ENCODE measurements at regions of chr16 and their contacts with region 1.

Region 1: GRCh38 chr16:1363501-1364041 is 11.8 kb downstream of the GNPTG start:
- DNase-seq: peak; percentile 48 to 78 (median 68)
- ATAC-seq: peak; percentile 92
- H3K4me3 ChIP-seq: no peak overlapping the region
- H3K4me3 Mint-ChIP-seq: no peak overlapping the region
- H3K27ac ChIP-seq: no peak overlapping the region
- H3K27ac Mint-ChIP-seq: peak overlapping the region in 2 of 9 donors; percentile 73 to 74
- H3K4me1 ChIP-seq: no peaks in the 10 kb centered on the region
- H3K4me1 Mint-ChIP-seq: peaks cover 0 to 6% (median 0%) of the 10 kb centered on the region in 7 donors
- H3K27me3 ChIP-seq: no peaks in the 10 kb centered on the region
- H3K27me3 Mint-ChIP-seq: no peaks in the 10 kb centered on the region

Region 2: GRCh38 chr16:1408171-1408837 is 44.7 kb after region 1 on chr16:
- CTCF ChIA-PET with region 1: interaction called, 3 read pairs
- POLR2A ChIA-PET with region 1: interaction called, 3 read pairs
- intact Hi-C with region 1: loop called (anchors 1 to 5 kb)
- DNase-seq: peak; percentile 88 to 98 (median 92)
- ATAC-seq: peak; percentile 99
- H3K4me3 ChIP-seq: peak overlapping the region; percentile 48
- H3K4me3 Mint-ChIP-seq: peak overlapping the region; percentile 57 to 85 (median 71)
- H3K27ac ChIP-seq: peak overlapping the region; percentile 59
- H3K27ac Mint-ChIP-seq: peak overlapping the region in 6 of 9 donors; percentile 13 to 78 (median 60)
- H3K4me1 ChIP-seq: peaks cover 5 to 9% of the 10 kb centered on the region in 2 donors
- H3K4me1 Mint-ChIP-seq: peaks cover 0 to 58% (median 33%) of the 10 kb centered on the region in 7 donors
- H3K27me3 ChIP-seq: no peaks in the 10 kb centered on the region
- H3K27me3 Mint-ChIP-seq: no peaks in the 10 kb centered on the region

Region 3: GRCh38 chr16:1413684-1414531 is 50.3 kb after region 1 on chr16:
- CTCF ChIA-PET with region 1: interaction called, 3 read pairs
- POLR2A ChIA-PET with region 1: no interaction called
- intact Hi-C with region 1: loop called (anchors 1 to 5 kb)
- DNase-seq: peak; percentile 44 to 77 (median 57)
- ATAC-seq: peak; percentile 66
- H3K4me3 ChIP-seq: peak overlapping the region; percentile 79
- H3K4me3 Mint-ChIP-seq: peak overlapping the region; percentile 75 to 91 (median 85)
- H3K27ac ChIP-seq: peak overlapping the region; percentile 89
- H3K27ac Mint-ChIP-seq: peak overlapping the region; percentile 70 to 92 (median 88)
- H3K4me1 ChIP-seq: peaks cover 0 to 8% of the 10 kb centered on the region in 2 donors
- H3K4me1 Mint-ChIP-seq: peaks cover 0 to 33% (median 26%) of the 10 kb centered on the region in 7 donors
- H3K27me3 ChIP-seq: no peaks in the 10 kb centered on the region
- H3K27me3 Mint-ChIP-seq: no peaks in the 10 kb centered on the region

Region 4: DNA sequence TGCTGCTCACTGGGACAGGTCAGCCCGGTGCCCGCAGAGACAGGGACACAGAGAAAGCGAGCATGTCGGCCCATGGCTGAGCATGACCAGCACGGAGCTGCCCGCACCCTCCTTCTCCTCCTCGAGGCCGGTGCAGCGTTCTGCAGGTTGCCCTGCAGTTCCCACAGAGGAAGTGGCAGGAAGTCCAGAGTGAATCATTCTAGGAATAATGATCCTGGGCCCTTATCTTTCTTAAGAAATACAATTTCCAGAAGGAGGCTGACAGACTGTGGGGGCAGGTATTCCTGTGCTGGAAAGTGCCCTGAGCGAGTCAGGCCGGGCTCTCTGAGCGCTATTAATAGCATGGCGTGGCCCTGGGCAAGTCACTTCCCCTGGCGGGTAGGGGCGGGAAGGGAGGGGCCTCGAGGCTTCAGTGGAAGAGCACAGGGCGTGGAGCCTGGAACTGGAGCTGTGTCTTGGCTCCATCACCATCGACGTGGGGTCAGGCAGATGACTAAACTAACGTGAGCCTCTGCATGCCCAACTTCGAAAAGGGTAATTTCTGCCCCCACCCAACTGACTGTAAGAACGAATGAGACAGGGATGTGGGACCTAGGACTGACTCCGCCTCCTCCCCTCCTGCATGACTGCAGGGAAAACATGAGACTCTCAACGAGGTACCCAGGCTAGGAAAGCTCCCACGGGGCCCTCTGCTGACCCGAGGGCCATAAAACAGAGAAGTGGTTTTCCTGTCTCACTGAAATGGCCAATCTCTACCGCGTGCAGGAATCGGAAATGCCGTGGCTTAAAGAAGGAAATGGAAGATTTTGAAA is 179.7 kb after region 1 on chr16:
- CTCF ChIA-PET with region 1: no interaction called
- POLR2A ChIA-PET with region 1: no interaction called
- intact Hi-C with region 1: loop called in 1 of 2 experiments (anchors 5 kb)
- DNase-seq: peak in 5 of 9 donors; percentile 23 to 59 (median 38)
- ATAC-seq: peak; percentile 81
- H3K4me3 ChIP-seq: no peak overlapping the region
- H3K4me3 Mint-ChIP-seq: peak overlapping the region; percentile 70 to 86 (median 76)
- H3K27ac ChIP-seq: peak overlapping the region; percentile 51
- H3K27ac Mint-ChIP-seq: peak overlapping the region; percentile 71 to 95 (median 86)
- H3K4me1 ChIP-seq: peaks cover 13 to 70% of the 10 kb centered on the region in 2 donors
- H3K4me1 Mint-ChIP-seq: peaks cover 51 to 89% (median 66%) of the 10 kb centered on the region in 7 donors
- H3K27me3 ChIP-seq: no peaks in the 10 kb centered on the region
- H3K27me3 Mint-ChIP-seq: no peaks in the 10 kb centered on the region

Region 5: DNA sequence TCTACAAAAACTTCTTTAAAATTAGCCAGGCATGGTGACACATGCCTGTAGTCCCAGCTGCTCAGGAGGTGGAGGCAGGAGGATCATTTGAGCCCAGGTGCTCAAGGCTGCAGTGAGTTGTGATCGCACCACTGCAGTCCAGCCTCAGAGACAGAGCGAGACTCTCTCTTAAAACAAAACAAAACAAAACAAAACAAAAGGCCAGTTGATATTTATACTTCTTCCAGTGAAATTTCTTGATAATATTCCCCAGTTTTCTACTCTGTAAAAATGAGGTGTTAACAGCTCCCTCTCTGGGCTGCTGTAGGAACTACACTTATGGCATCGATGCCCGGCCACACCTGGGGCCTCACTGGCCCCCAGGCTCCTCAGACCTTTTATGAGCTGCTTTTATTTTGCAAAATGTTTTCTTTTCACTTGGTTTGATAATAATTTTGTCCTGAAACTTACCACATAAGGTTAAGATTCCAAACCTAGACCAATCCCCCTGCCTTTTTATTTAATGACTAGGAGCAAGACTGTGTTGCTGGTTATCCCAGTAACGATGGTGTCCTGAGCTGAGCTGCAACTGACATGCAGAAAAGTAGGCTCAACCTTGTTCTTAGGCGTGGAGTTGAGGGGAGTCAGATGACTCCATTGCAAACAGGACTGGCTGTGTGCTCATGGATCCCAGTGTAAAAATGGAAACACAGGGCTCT is 360.0 kb after region 1 on chr16:
- CTCF ChIA-PET with region 1: no interaction called
- POLR2A ChIA-PET with region 1: no interaction called
- intact Hi-C with region 1: loop called in 1 of 2 experiments (anchors 1 kb)
- DNase-seq: peak in 7 of 9 donors; percentile 14 to 48 (median 39)
- ATAC-seq: peak; percentile 64
- H3K4me3 ChIP-seq: no peak overlapping the region
- H3K4me3 Mint-ChIP-seq: peak overlapping the region in 5 of 10 donors; percentile 13 to 57 (median 37)
- H3K27ac ChIP-seq: peak overlapping the region; percentile 4
- H3K27ac Mint-ChIP-seq: peak overlapping the region in 8 of 9 donors; percentile 32 to 74 (median 55)
- H3K4me1 ChIP-seq: peaks cover 17 to 28% of the 10 kb centered on the region in 2 donors
- H3K4me1 Mint-ChIP-seq: peaks cover 29 to 53% (median 44%) of the 10 kb centered on the region in 7 donors
- H3K27me3 ChIP-seq: no peaks in the 10 kb centered on the region
- H3K27me3 Mint-ChIP-seq: no peaks in the 10 kb centered on the region

Measured in naive thymus-derived CD4-positive, alpha-beta T cell (primary cell).